ENCODE measurements at regions of chr2 and their contacts with region 1.

Region 1: GRCh38 chr2:202265467-202266277 is at the start of gene NOP58:
- DNase-seq: peak; percentile 65 to 94 (median 78)
- ATAC-seq: peak; percentile 88
- H3K4me3 ChIP-seq: peak within 1 kb of the TSS; percentile 99
- H3K27ac ChIP-seq: peak within 1 kb of the TSS; percentile 100
- H3K4me1 ChIP-seq: peaks cover 8 to 10% of the 10 kb centered on the region in 2 experiments
- H3K27me3 ChIP-seq: no peaks in the 10 kb centered on the region
- CTCF ChIP-seq: no peak
- EP300 ChIP-seq: no peak
- POLR2A ChIP-seq: peak; percentile 98
- RAD21 ChIP-seq: no peak
- polyA plus RNA-seq, gene NOP58: 290 to 332 TPM

Region 2: GRCh38 chr2:202135091-202135874 is 130.4 kb before region 1 on chr2:
- CTCF ChIA-PET with region 1: no interaction called
- POLR2A ChIA-PET with region 1: no interaction called
- in situ Hi-C with region 1: no loop called
- intact Hi-C with region 1: no loop called
- DNase-seq: no peak
- ATAC-seq: no peak
- H3K4me3 ChIP-seq: no peak overlapping the region
- H3K27ac ChIP-seq: no peak overlapping the region
- H3K4me1 ChIP-seq: no peaks in the 10 kb centered on the region
- H3K27me3 ChIP-seq: peaks cover 6 to 24% of the 10 kb centered on the region in 2 experiments; a peak in 3 of 5 replicates
- CTCF ChIP-seq: no peak
- EP300 ChIP-seq: no peak
- POLR2A ChIP-seq: no peak
- RAD21 ChIP-seq: no peak

Region 3: DNA sequence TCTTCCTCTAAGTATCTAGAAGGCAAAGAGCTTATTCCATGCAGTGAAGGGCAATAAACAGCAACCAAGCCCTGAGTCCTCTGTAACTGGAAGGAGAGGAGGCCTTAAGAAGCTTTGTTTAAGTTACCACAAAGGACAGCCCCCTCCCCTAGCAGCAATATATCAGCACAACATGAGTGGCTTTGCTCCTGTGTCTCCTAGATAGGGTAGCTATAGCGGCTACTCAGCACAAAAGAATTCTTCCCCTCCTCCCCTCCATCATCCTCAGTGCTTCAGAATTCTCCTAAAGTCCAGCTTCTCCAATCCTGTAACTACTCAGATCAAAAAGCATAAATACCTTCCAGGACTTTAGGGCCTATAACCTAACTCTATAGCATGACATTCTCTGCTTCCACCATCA is 43.8 kb before region 1 on chr2:
- CTCF ChIA-PET with region 1: no interaction called
- POLR2A ChIA-PET with region 1: interaction called, 11 read pairs
- in situ Hi-C with region 1: no loop called
- intact Hi-C with region 1: loop called (anchors 5 kb)
- DNase-seq: peak; percentile 23 to 87 (median 54)
- ATAC-seq: peak; percentile 97
- H3K4me3 ChIP-seq: no peak overlapping the region
- H3K27ac ChIP-seq: peak overlapping the region; percentile 55
- H3K4me1 ChIP-seq: peaks cover 6 to 12% of the 10 kb centered on the region in 2 experiments; a peak in 3 of 5 replicates
- H3K27me3 ChIP-seq: no peaks in the 10 kb centered on the region
- CTCF ChIP-seq: no peak
- EP300 ChIP-seq: peak; percentile 79; the same call in 1 of the 2 replicates
- POLR2A ChIP-seq: no peak
- RAD21 ChIP-seq: no peak

Region 4: DNA sequence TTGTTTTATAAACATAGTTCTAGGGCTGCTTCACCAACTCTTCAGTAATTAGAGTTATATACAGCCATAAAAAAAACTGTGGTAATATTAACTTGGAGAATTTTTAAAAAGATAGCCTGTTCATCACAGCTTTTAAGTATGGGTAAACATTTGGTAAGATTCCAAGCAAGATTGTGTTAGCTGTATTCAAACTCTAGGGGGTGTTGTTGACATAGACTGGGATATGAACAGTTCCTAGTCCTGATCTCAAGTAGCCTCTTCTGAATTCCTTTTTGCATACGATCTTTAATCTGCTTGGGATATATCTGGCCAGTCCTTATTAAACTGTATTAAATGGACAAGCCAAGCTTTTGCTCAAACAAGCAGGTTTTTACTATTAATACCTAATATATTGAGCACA is 13.3 kb after region 1 on chr2:
- CTCF ChIA-PET with region 1: interaction called, 5 read pairs
- POLR2A ChIA-PET with region 1: interaction called, 24 read pairs
- in situ Hi-C with region 1: no loop called
- intact Hi-C with region 1: no loop called
- DNase-seq: peak in 1 of 4 experiments; percentile 14
- ATAC-seq: peak; percentile 73
- H3K4me3 ChIP-seq: no peak overlapping the region
- H3K27ac ChIP-seq: no peak overlapping the region
- H3K4me1 ChIP-seq: no peaks in the 10 kb centered on the region
- H3K27me3 ChIP-seq: no peaks in the 10 kb centered on the region
- CTCF ChIP-seq: peak in 1 of 3 experiments; percentile 28; a peak in 1 of 6 replicates
- EP300 ChIP-seq: no peak
- POLR2A ChIP-seq: no peak
- RAD21 ChIP-seq: peak in 1 of 2 experiments; percentile 33; a peak in 2 of 4 replicates

Measured in K562 (cell line).